Mucosa of descending colon (tissue), 3 donors: ENCODE measurements at regions of chr14 and their contacts with region 1.

Region 1: GRCh38 chr14:103500148-103500990 is 22.3 kb downstream of the CKB start:
- DNase-seq: peak; percentile 81 to 98 (median 90)
- ATAC-seq: peak; percentile 99
- H3K4me3 ChIP-seq: no peak overlapping the region
- H3K4me1 ChIP-seq: peaks cover 4% of the 10 kb centered on the region
- CTCF ChIP-seq: peak; percentile 78

Region 2: DNA sequence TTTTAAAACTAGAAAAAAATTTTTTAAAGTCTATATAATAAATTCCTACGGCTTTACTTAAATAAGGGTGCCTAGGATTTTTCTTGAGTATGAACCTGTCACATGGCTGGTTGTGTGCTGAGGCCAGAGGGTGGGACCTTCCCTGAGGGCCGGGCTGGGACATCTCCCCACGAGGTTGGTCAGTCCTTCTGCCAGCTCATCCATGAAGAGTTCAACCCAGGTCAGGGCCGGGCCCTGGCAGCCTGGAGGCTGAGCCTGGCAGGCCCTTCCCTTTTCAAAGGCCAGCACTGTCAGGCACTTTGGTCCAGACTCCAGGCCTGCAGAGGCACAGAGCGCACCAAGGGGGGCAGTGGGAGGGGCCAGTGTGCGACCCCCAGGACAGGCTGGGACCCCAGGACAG is 345.4 kb before region 1 on chr14:
- intact Hi-C with region 1: no loop called
- DNase-seq: peak in 2 of 3 donors; percentile 46 to 47
- ATAC-seq: peak; percentile 96
- H3K4me3 ChIP-seq: no peak overlapping the region
- H3K4me1 ChIP-seq: no peaks in the 10 kb centered on the region
- CTCF ChIP-seq: no peak

Region 3: GRCh38 chr14:103546652-103547454 is 46.5 kb after region 1 on chr14:
- intact Hi-C with region 1: loop called (anchors 5 to 10 kb)
- DNase-seq: peak; percentile 76 to 87 (median 83)
- ATAC-seq: peak; percentile 61
- H3K4me3 ChIP-seq: no peak overlapping the region
- H3K4me1 ChIP-seq: peaks cover 36% of the 10 kb centered on the region
- CTCF ChIP-seq: peak; percentile 84

Region 4: DNA sequence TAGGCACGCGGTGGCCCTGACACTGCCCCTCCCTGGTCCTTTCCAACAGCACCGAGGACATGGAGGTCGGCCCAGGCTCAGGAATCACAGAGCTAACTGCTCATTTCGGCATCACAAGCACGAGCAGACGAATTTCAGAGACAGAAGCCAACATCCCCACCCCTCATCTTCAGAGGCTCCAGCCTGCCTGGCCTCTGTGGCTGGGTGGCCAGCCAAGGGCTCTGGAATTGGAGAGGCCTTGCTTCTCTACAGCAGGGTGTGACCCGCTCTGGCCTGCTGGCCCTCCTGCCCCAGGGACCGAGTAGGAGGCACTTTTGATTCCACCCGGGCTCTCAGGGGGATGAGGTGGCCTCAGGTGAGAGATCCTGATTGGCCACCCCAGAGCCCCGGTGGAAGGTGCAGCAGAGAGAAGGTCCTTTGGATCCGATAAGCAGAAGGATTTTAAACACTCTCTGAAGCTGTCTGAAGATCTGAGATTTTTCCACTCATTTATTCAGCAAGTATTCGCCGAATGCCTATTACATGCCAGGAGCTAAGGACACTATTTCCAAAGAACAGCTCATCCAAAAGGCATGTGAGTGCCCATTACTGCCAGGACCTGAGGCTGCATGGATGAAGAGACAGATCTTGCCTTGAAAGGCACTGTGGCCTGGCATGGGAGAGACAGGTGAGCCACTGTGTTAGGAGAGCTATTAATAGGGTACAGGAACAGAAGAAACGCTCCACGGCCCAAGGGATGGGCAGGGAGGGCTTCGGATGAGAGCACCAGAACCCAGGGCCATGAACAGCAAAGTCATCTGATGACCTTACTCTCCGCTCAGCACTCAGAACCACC is 51.9 kb after region 1 on chr14:
- intact Hi-C with region 1: loop called (anchors 5 to 10 kb)
- DNase-seq: peak in 1 of 3 donors; percentile 27
- ATAC-seq: peak; percentile 20
- H3K4me3 ChIP-seq: no peak overlapping the region
- H3K4me1 ChIP-seq: peaks cover 9% of the 10 kb centered on the region
- CTCF ChIP-seq: no peak